Activated naive CD4-positive, alpha-beta T cell treated with anti-CD3 and anti-CD28 coated beads for 36 hours (primary cell): ENCODE measurements at regions of chr3 and their contacts with region 1.

Region 1: GRCh38 chr3:63349583-63350521 is 71.7 kb downstream of the SYNPR start:
- DNase-seq: peak; percentile 64
- H3K4me3 Mint-ChIP-seq: no peak overlapping the region
- H3K27ac Mint-ChIP-seq: no peak overlapping the region
- H3K4me1 Mint-ChIP-seq: no peaks in the 10 kb centered on the region
- H3K27me3 Mint-ChIP-seq: peaks cover 32% of the 10 kb centered on the region

Region 2: GRCh38 chr3:62287392-62287927 is 1062.4 kb before region 1 on chr3:
- CTCF ChIA-PET with region 1: no interaction called
- intact Hi-C with region 1: no loop called
- DNase-seq: no peak
- H3K4me3 Mint-ChIP-seq: no peak overlapping the region
- H3K27ac Mint-ChIP-seq: no peak overlapping the region
- H3K4me1 Mint-ChIP-seq: no peaks in the 10 kb centered on the region
- H3K27me3 Mint-ChIP-seq: peaks cover 2% of the 10 kb centered on the region

Region 3: DNA sequence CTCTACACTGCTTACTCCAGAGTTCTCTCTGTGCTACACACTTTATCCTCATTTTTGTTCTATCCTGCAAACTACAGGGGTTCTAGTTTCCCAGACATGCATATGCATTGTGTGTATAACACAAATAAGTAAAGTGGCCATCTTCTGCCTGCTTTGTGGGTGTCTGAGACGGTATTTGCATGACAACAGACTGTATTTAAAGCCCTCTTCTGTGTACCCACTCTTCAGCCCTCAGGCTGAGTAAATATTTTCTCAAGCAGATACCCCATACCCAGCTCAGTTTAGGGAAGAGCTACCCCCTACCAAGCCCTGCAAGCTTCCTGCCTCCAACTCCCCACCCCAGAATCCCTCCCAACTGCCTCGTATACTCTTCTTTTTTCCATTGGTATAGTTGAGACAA is 40.1 kb before region 1 on chr3:
- CTCF ChIA-PET with region 1: no interaction called
- intact Hi-C with region 1: no loop called
- DNase-seq: no peak
- H3K4me3 Mint-ChIP-seq: no peak overlapping the region
- H3K27ac Mint-ChIP-seq: no peak overlapping the region
- H3K4me1 Mint-ChIP-seq: no peaks in the 10 kb centered on the region
- H3K27me3 Mint-ChIP-seq: peaks cover 2% of the 10 kb centered on the region

Region 4: DNA sequence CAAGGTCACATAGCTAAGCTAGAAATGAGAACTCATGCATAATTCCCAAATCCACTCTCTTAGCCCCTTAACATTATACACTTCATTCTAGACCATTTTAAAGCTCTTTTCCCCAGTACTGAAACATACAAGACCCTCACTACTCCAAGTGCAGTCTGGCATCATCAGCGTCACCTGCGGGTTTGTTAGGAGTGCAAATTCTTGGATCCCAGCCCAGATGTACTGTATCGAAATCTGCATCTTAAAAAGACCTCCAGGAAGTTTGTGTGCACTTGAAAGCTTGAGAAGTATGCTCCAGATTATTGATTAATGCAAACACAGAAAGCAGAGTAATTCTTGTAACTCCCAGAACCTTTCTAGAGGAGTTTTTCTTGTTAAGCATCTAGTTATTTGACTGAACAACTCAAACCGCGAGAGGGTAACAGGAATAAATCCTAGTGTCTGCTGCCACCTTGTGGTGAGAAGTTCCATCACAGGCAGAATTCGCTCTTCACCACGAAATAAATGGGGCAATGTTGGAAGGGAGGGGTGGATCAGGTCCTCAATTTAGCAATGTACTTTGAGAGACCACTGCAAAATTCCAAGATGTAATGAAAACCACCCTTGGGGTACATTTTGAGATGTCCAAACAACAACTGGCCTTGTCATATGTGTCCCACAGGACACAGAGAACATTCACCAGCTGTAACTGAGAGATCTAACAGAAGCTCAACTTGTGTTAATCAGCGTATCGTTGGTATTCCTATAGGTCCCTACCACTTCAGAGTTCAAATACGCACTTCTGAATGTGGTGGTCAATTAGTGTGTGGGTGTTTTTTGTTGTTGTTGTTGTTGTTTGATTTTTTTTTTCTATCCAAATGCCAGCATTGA is 468.7 kb after region 1 on chr3:
- CTCF ChIA-PET with region 1: interaction called, 82 read pairs
- intact Hi-C with region 1: loop called (anchors 1 kb)
- DNase-seq: peak; percentile 75
- H3K4me3 Mint-ChIP-seq: no peak overlapping the region
- H3K27ac Mint-ChIP-seq: no peak overlapping the region
- H3K4me1 Mint-ChIP-seq: peaks cover 2% of the 10 kb centered on the region
- H3K27me3 Mint-ChIP-seq: no peaks in the 10 kb centered on the region